ENCODE measurements at regions of chr2 and their contacts with region 1.

Region 1: GRCh38 chr2:201451292-201452057 is at the starts of genes STRADB and TRAK2:
- DNase-seq: peak; percentile 97
- ATAC-seq: peak; percentile 98
- total RNA-seq, gene STRADB: 79.1 TPM
- total RNA-seq, gene TRAK2: 163 TPM

Region 2: GRCh38 chr2:200877443-200877842 is 574.0 kb before region 1 on chr2:
- intact Hi-C with region 1: no loop called
- DNase-seq: no peak
- ATAC-seq: peak; percentile 70

Region 3: GRCh38 chr2:200913654-200914053 is 537.8 kb before region 1 on chr2:
- intact Hi-C with region 1: no loop called
- DNase-seq: no peak
- ATAC-seq: no peak

Region 4: DNA sequence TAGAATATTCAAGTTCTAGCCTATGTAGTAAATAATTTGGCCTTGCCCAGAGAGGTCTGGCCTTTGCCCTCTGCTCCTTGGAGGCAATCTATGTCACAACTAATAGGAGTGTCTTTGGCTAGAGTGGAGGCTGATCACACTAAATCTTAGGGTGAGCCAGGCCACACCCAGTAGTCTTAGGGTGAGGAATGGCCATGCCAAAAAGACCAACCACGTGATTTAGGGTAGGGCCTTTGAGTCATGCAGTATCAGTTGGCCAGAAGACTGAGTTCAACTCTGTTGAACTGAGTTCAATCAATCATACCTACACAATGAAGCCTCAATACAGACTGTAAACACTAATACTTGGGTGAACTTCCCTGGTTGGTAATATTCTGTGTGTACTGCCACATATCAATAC is 68.3 kb before region 1 on chr2:
- intact Hi-C with region 1: no loop called
- DNase-seq: no peak
- ATAC-seq: peak; percentile 39

Region 5: GRCh38 chr2:201406077-201406662 is 45.3 kb before region 1 on chr2:
- intact Hi-C with region 1: loop called (anchors 2 kb)
- DNase-seq: no peak
- ATAC-seq: peak; percentile 55

Region 6: GRCh38 chr2:201432038-201432620 is 19.3 kb before region 1 on chr2:
- intact Hi-C with region 1: loop called (anchors 1 kb)
- DNase-seq: no peak
- ATAC-seq: no peak

Region 7: GRCh38 chr2:201572846-201573508 is 121.5 kb after region 1 on chr2:
- intact Hi-C with region 1: no loop called
- DNase-seq: no peak
- ATAC-seq: no peak

Region 8: DNA sequence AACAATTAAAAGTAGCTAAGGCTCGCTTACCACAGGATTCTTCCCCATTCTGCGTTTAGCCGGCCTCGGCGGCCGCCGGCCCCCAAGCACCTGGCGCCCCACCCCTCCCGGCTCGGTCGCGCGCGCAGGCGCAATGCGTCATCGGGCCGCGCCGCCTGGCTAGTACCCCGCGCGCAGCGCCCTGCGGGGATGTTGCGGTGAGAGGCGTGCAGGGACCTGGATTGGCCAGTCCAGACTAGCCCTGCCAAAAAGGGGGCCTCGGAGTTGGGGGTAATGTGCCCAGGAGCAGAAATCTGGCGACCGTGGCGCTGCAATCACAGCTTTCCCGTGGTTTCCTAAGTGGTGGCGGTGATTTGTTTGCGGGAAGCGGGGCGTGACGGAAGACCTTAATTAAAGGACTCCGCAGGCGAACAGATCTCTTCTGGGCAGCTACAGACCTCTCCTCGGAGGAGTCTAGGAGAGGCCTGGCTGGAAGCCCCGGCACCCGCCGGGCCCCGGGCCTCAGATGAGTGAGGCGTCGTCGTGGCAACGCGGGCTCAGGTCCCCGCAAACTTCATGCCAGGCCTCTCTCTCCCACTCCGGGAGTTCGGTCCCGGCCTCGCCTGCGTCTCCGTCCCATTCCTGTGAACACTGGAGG is 191.2 kb after region 1 on chr2:
- intact Hi-C with region 1: loop called (anchors 10 kb)
- DNase-seq: peak; percentile 92
- ATAC-seq: peak; percentile 94